ENCODE measurements at regions of chr3 and their contacts with region 1.

Region 1: GRCh38 chr3:58491506-58492402 is at the start of gene KCTD6:
- DNase-seq: peak; percentile 91
- H3K4me3 Mint-ChIP-seq: peak within 1 kb of the TSS; percentile 94
- H3K27ac Mint-ChIP-seq: peak within 1 kb of the TSS; percentile 78
- H3K4me1 Mint-ChIP-seq: peaks cover 52% of the 10 kb centered on the region
- H3K27me3 Mint-ChIP-seq: peaks cover 35% of the 10 kb centered on the region
- total RNA-seq, gene KCTD6: 9.4 to 12.4 TPM

Region 2: GRCh38 chr3:58414538-58415197 is 77.1 kb before region 1 on chr3:
- CTCF ChIA-PET with region 1: no interaction called
- POLR2A ChIA-PET with region 1: no interaction called
- DNase-seq: peak; percentile 54
- H3K4me3 Mint-ChIP-seq: no peak overlapping the region
- H3K27ac Mint-ChIP-seq: no peak overlapping the region
- H3K4me1 Mint-ChIP-seq: peaks cover 5% of the 10 kb centered on the region
- H3K27me3 Mint-ChIP-seq: no peaks in the 10 kb centered on the region

Region 3: DNA sequence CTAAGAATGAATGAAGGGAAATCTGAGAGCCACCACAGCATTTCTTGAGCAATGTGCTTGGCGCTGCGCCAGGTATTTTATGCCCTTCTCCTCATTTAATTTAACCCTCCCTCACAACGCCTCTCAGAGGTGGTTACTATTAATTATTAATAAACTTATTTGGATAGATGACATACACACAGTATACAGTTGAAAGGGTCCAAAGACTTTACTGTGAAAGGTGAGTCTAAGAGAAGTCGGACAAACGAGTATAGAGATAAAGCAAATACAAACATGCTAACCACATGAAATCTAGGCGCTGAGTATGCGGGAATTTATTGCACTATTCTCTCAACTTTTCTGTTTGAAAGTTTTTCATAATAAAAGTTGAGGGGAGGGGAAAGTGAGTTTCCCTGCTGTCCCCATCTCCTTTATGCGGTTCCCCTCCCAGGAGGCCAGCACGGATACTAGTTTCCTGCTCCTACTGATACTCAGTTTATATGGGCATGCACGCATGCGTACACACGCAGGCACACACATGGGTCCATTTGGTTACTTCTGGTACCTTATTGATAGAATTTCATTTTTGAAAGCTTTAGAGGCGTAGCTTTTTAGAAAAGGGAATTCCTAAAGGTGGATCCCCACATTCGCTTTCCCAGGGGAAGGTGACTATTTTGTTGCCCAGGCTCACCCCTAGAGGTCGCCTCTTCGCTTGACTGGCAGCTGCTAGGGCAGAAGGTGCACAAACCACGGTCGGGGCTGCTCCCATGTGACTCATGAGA is 28.4 kb before region 1 on chr3:
- CTCF ChIA-PET with region 1: interaction called, 34 read pairs
- POLR2A ChIA-PET with region 1: interaction called, 8 read pairs
- DNase-seq: peak; percentile 78
- H3K4me3 Mint-ChIP-seq: no peak overlapping the region
- H3K27ac Mint-ChIP-seq: peak overlapping the region; percentile 40
- H3K4me1 Mint-ChIP-seq: peaks cover 21% of the 10 kb centered on the region
- H3K27me3 Mint-ChIP-seq: no peaks in the 10 kb centered on the region

Region 4: GRCh38 chr3:58471025-58471887 is 20.5 kb before region 1 on chr3:
- CTCF ChIA-PET with region 1: interaction called, 56 read pairs
- POLR2A ChIA-PET with region 1: interaction called, 44 read pairs
- DNase-seq: peak; percentile 75
- H3K4me3 Mint-ChIP-seq: peak overlapping the region; percentile 62
- H3K27ac Mint-ChIP-seq: peak overlapping the region; percentile 89
- H3K4me1 Mint-ChIP-seq: peaks cover 61% of the 10 kb centered on the region
- H3K27me3 Mint-ChIP-seq: no peaks in the 10 kb centered on the region

Region 5: GRCh38 chr3:58532794-58533220 is 41.1 kb after region 1 on chr3:
- CTCF ChIA-PET with region 1: interaction called, 10 read pairs
- POLR2A ChIA-PET with region 1: interaction called, 4 read pairs
- DNase-seq: peak; percentile 82
- H3K4me3 Mint-ChIP-seq: no peak overlapping the region
- H3K27ac Mint-ChIP-seq: no peak overlapping the region
- H3K4me1 Mint-ChIP-seq: peaks cover 14% of the 10 kb centered on the region
- H3K27me3 Mint-ChIP-seq: no peaks in the 10 kb centered on the region

Measured in activated CD4-positive, alpha-beta memory T cell treated with anti-CD3 and anti-CD28 coated beads, Interleukin-2, amount 10 ng/mL, durations not matched to agents 7 days and 5 days (primary cell).